AG04450 (cell line): ENCODE measurements at regions of chr1 and their contacts with region 1.

Region 1: DNA sequence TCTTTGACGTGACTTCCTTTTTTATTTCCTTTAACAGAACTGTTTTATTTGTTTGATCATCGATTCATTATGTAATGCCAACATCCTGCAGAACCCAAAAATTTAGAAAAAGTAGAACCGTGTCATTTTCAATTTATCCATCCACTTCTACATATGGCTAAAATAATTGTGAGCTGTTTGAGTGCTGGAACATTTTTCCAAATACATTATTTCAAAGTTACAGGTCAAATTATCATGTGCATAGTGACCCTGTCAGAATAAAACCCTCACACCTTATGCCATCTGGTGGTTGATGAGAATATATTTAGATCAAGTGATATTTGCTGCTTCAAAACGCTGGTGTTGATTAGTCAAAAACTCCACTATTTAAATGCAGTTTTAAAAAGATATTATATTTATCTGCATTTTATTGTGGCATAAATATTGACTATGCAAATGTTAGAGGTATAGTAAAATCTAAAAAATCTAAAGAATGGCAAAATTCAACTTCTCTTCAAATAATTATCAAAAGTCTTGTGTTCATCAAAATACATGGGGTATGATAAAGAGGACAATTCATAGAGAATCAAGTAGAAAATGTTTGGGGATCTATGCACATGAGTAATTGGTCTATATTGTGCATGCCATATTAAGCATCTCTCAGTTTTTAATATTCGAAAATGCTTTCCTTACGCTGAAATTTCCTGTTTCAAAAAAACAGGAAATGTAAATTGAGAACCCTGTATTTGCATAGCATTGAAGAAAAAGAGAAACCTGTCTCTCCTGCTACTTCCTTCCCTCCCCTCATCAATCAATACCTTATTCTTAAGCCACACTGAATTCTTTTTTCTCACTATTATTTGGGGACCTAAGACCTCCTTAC is 39.7 kb downstream of the UBE2U start:
- DNase-seq: no peak
- H3K4me3 ChIP-seq: no peak overlapping the region
- H3K27ac ChIP-seq: no peak overlapping the region
- H3K27me3 ChIP-seq: no peaks in the 10 kb centered on the region
- CTCF ChIP-seq: peak; percentile 49

Region 2: DNA sequence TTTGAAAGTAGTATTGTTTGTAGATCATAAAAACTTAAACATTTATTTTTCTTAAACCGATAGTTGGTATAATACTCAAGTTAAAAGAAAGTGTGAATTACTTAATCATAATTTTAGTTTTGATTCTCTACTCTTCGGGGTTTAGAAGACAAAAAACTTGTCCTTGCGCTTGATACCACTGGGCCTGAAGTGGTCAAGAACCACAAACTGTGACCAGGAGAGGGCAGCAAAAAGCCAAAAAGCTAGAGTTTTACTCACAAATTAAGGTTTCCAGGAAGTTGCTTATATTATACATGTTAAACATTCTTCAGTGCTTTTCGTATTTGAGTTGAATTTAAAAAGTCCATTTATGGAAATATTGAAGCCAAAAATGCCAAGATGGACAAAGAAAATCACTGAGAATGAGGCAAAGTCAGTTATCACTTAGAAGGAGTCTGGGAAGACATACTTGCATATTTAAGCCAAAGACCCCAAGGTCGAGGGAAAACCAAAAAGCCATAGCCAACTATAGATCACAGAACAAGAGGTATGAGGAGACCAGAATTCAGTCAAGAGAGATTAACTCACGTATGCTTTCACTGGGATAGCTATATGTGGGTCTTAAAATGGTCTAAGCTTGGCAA is 685.6 kb before region 1 on chr1:
- CTCF ChIA-PET with region 1: interaction called, 49 read pairs
- POLR2A ChIA-PET with region 1: no interaction called
- DNase-seq: peak; percentile 8
- H3K4me3 ChIP-seq: no peak overlapping the region
- H3K27ac ChIP-seq: no peak overlapping the region
- H3K27me3 ChIP-seq: no peaks in the 10 kb centered on the region
- CTCF ChIP-seq: peak; percentile 71

Region 3: DNA sequence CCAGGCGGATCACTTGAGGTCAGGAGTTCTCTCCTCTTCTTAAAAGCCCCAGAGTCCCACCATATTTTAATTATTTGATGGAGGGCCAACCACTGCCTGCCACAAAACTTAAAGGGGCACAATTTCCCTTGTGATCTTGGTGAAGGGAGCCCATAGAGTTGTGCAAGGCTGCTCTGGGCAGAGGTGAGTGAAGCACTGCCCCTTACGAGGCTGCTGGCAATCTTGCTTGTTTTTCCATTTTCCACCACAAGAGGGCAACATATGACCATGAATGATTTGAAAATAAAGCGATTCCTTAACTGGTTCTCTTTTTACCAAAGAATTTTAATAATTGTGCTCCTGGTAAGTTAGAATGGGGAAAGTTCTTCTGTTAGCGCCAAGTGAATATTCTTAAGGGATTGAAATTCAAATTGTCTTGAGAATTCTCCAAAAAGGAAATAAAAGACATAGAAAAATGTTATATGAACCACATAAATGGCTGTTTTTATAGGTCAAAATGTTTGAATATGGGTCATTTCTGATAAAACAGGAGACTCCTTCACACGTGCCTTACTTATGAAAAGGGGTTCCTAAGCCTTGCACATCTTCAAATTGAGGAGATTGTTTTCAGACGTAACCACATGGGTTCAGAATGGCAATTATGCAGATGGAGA is 627.2 kb before region 1 on chr1:
- CTCF ChIA-PET with region 1: interaction called, 109 read pairs
- POLR2A ChIA-PET with region 1: no interaction called
- DNase-seq: peak; percentile 57
- H3K4me3 ChIP-seq: no peak overlapping the region
- H3K27ac ChIP-seq: no peak overlapping the region
- H3K27me3 ChIP-seq: no peaks in the 10 kb centered on the region
- CTCF ChIP-seq: peak; percentile 65

Region 4: DNA sequence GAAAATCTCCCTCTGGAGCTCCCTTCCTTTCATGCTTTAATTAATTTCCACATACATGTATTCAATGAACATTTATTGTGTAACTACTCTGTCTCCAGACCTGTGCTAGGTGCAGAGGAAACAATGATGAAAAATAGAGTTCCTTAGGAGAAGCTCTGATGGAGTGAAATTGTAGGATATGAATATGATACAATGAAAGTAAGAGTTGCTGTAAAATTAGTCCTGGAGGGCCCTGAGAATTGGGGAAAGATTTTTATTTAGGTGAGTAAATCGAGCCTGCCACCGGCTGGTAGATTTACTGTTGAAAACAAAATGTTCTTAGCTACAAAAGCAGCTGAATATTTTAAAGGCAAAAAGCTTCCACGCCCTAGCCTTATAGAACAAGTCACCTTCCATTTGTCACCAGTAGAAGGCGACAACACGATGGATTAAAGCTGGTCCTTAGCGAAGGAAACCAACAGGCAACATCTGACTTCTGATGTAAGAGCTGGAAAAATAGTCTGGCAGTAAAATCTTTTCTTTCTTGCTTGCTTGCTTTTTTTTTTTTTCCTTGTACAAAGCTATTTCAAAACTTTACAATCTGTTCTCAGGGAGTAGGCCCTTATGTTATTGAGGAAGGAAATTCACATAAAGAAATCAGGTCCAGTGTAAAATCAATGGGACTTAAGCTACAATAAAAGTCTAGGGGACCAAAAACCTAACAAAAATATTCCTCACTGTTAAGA is 551.3 kb before region 1 on chr1:
- CTCF ChIA-PET with region 1: interaction called, 104 read pairs
- POLR2A ChIA-PET with region 1: no interaction called
- DNase-seq: peak; percentile 68
- H3K4me3 ChIP-seq: no peak overlapping the region
- H3K27ac ChIP-seq: no peak overlapping the region
- H3K27me3 ChIP-seq: peaks cover 10% of the 10 kb centered on the region
- CTCF ChIP-seq: peak; percentile 68

Region 5: GRCh38 chr1:64228167-64228957 is 14.8 kb before region 1 on chr1:
- CTCF ChIA-PET with region 1: interaction called, 15 read pairs
- POLR2A ChIA-PET with region 1: no interaction called
- DNase-seq: no peak
- H3K4me3 ChIP-seq: no peak overlapping the region
- H3K27ac ChIP-seq: no peak overlapping the region
- H3K27me3 ChIP-seq: no peaks in the 10 kb centered on the region
- CTCF ChIP-seq: no peak